ENCODE measurements at regions of chr15 and their contacts with region 1.

Region 1: GRCh38 chr15:65184868-65185738 is at the start of gene CLPX:
- DNase-seq: peak; percentile 86
- H3K4me3 Mint-ChIP-seq: peak within 1 kb of the TSS; percentile 98
- H3K27ac Mint-ChIP-seq: peak within 1 kb of the TSS; percentile 92
- H3K4me1 Mint-ChIP-seq: peaks cover 24% of the 10 kb centered on the region
- H3K27me3 Mint-ChIP-seq: no peaks in the 10 kb centered on the region
- total RNA-seq, gene CLPX: 55.7 and 57.2 TPM in 2 replicates

Region 2: GRCh38 chr15:64825431-64826294 is 359.4 kb before region 1 on chr15 and contains the start of gene PIF1:
- intact Hi-C with region 1: loop called (anchors 10 kb)
- DNase-seq: peak; percentile 92
- H3K4me3 Mint-ChIP-seq: peak within 1 kb of the TSS; percentile 91
- H3K27ac Mint-ChIP-seq: peak within 1 kb of the TSS; percentile 91
- H3K4me1 Mint-ChIP-seq: peaks cover 40% of the 10 kb centered on the region
- H3K27me3 Mint-ChIP-seq: no peaks in the 10 kb centered on the region
- total RNA-seq, gene PIF1: 19.1 and 23.9 TPM in 2 replicates

Region 3: GRCh38 chr15:65028921-65029735 is 156.0 kb before region 1 on chr15 and contains the start of gene MTFMT:
- intact Hi-C with region 1: loop called (anchors 5 kb)
- DNase-seq: peak; percentile 83
- H3K4me3 Mint-ChIP-seq: peak within 1 kb of the TSS; percentile 89
- H3K27ac Mint-ChIP-seq: peak within 1 kb of the TSS; percentile 78
- H3K4me1 Mint-ChIP-seq: peaks cover 23% of the 10 kb centered on the region
- H3K27me3 Mint-ChIP-seq: peaks cover 16% of the 10 kb centered on the region
- total RNA-seq, gene MTFMT: 18.8 and 21.1 TPM in 2 replicates

Region 4: DNA sequence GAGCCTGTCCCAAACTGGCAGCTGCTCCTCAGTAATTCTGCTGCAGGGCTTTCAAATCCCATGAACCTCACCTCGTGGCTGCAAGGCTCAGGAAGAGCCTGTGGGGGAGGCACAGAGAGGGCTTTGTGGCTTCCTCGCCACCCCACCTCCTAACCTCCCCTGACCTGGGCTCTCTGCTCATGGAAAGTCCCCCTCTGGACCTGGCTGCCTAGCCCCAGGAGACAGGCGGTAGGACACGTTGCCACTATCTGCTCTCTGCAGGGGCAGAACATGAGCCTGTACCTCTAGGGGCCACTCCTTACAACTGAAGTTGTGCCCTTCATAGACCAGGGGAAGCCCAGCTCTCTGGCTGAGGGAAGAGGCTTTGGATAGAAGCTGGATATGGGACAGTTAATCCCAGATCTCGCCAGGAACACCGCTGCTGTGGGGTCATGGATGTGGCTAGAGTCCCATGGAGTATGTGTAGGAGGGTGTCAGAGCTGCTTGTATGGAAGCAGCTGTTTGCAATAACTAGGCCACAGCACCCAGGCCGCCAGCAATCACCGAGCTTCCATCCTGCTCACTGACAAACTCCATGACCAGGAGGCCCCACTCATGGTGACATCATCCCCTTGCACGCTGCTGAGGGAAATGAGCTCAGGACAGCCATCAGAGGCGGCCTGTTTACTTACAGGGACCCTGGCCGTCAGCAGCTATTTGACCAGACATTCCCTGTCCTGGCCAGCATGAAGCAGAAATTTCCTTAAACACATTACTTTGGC is 60.2 kb after region 1 on chr15:
- intact Hi-C with region 1: loop called (anchors 1 kb)
- DNase-seq: no peak
- H3K4me3 Mint-ChIP-seq: no peak overlapping the region
- H3K27ac Mint-ChIP-seq: no peak overlapping the region
- H3K4me1 Mint-ChIP-seq: peaks cover 12% of the 10 kb centered on the region
- H3K27me3 Mint-ChIP-seq: no peaks in the 10 kb centered on the region

Region 5: GRCh38 chr15:65286704-65287519 is 101.8 kb after region 1 on chr15 and contains the start of gene PARP16:
- intact Hi-C with region 1: loop called (anchors 1 kb)
- DNase-seq: peak; percentile 90
- H3K4me3 Mint-ChIP-seq: peak within 1 kb of the TSS; percentile 86
- H3K27ac Mint-ChIP-seq: peak within 1 kb of the TSS; percentile 76
- H3K4me1 Mint-ChIP-seq: peaks cover 27% of the 10 kb centered on the region
- H3K27me3 Mint-ChIP-seq: no peaks in the 10 kb centered on the region
- total RNA-seq, gene PARP16: 12.4 and 14.0 TPM in 2 replicates

Region 6: GRCh38 chr15:65384895-65385858 is 200.1 kb after region 1 on chr15:
- intact Hi-C with region 1: loop called (anchors 1 kb)
- DNase-seq: peak; percentile 77
- H3K4me3 Mint-ChIP-seq: peak overlapping the region; percentile 83
- H3K27ac Mint-ChIP-seq: peak overlapping the region; percentile 86
- H3K4me1 Mint-ChIP-seq: peaks cover 11% of the 10 kb centered on the region
- H3K27me3 Mint-ChIP-seq: peaks cover 28% of the 10 kb centered on the region

Region 7: DNA sequence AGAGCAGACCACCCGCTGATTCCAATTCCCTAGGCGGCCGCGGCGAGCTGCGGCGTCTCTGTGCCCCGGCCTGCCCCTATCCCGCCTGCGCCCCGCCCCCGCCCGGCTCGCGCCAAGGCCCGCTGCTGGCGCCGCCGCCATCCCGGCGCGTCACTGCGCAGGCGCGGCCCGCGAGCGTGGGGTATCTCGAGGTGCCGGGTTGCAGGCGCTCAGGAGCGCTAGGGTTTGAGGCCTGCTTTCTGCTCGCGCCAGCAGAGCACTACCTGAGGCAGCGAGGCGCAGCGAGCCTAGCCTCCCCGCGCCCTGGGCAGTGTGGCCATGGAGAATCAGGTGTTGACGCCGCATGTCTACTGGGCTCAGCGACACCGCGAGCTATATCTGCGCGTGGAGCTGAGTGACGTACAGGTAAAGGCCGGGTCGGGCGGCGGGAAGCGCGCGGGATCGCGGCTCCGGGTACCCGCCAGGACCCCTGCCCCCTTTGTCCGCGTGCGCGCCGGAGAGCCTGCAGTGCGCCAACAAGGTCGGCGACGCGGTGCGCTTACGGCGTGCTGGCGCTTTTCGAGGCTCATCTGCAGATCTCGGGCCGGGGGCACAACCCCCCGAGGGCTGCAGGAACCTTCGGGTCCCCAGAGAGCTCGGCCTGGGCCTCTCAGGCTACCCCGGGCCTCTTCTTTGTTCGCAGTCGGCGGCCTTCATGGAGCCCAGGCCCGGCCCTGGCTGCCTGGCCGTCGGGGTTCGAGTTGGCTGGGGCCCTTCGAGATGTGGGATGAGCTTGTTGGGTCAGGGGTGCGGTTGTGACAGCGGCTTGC is 345.4 kb after region 1 on chr15 and contains the start of gene HACD3:
- intact Hi-C with region 1: loop called (anchors 1 kb)
- DNase-seq: peak; percentile 86
- H3K4me3 Mint-ChIP-seq: peak within 1 kb of the TSS; percentile 89
- H3K27ac Mint-ChIP-seq: peak within 1 kb of the TSS; percentile 83
- H3K4me1 Mint-ChIP-seq: peaks cover 39% of the 10 kb centered on the region
- H3K27me3 Mint-ChIP-seq: peaks cover 2% of the 10 kb centered on the region
- total RNA-seq, gene HACD3: 45.8 and 46.0 TPM in 2 replicates

Measured in activated T-helper 1 cell treated with anti-CD3 and anti-CD28 coated beads, Interleukin-12 subunit alpha, Interleukin-12 subunit beta, Interleukin-2, Interleukin-4 antibody, amounts not matched to agents 30 ng/mL and 10 ng/mL and 1 ng/mL, durations not matched to agents 14 hours and 24 hours and 36 hours (primary cell).